ENCODE measurements at regions of chr7 and their contacts with region 1.

Region 1: GRCh38 chr7:7944619-7945282 is 23.8 kb upstream of the GLCCI1 start:
- DNase-seq: peak; percentile 91
- H3K4me3 ChIP-seq: peak overlapping the region; percentile 56
- H3K27ac ChIP-seq: peak overlapping the region; percentile 91
- H3K4me1 ChIP-seq: peaks cover 37% of the 10 kb centered on the region
- CTCF ChIP-seq: no peak

Region 2: DNA sequence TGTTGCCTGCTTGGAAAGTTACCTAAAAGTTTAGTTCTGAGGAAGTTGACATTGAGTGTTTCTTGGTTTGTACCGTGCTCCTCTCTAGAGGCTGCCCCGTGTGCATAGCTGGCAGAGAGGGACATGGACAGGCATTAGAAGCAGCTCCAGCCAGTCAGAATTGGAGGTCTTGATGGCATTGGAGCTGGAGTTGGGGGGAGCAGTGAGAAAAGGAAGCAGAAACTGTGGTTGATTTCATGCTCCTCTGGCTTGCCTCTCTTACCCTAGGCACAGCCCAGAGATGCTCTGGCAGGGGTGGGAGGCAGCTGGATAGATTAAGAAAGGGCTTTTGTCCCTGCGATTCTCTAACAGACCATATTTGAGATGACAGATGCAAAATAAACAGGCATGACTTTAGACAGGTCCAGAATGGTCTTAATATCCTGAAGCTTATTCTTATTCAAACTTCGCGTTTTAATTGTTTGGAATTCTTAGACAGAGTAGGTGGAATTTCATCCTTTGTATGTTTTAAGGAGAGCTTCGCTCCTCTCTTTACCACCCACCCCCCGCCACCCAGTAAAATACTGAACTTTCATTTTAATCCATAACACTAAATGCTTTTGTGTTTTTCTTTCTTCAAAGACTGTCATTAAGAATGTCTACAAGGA is 49.6 kb before region 1 on chr7:
- CTCF ChIA-PET with region 1: no interaction called
- POLR2A ChIA-PET with region 1: no interaction called
- intact Hi-C with region 1: no loop called
- DNase-seq: no peak
- H3K4me3 ChIP-seq: no peak overlapping the region
- H3K27ac ChIP-seq: no peak overlapping the region
- H3K4me1 ChIP-seq: no peaks in the 10 kb centered on the region
- CTCF ChIP-seq: no peak

Region 3: GRCh38 chr7:7932580-7932979 is 12.2 kb before region 1 on chr7:
- CTCF ChIA-PET with region 1: interaction called, 3 read pairs
- POLR2A ChIA-PET with region 1: interaction called, 64 read pairs
- intact Hi-C with region 1: no loop called
- DNase-seq: no peak
- H3K4me3 ChIP-seq: no peak overlapping the region
- H3K27ac ChIP-seq: no peak overlapping the region
- H3K4me1 ChIP-seq: no peaks in the 10 kb centered on the region
- CTCF ChIP-seq: no peak

Region 4: GRCh38 chr7:7956531-7957128 is 11.9 kb after region 1 on chr7:
- CTCF ChIA-PET with region 1: no interaction called
- POLR2A ChIA-PET with region 1: interaction called, 15 read pairs
- intact Hi-C with region 1: no loop called
- DNase-seq: no peak
- H3K4me3 ChIP-seq: no peak overlapping the region
- H3K27ac ChIP-seq: no peak overlapping the region
- H3K4me1 ChIP-seq: peaks cover 14% of the 10 kb centered on the region
- CTCF ChIP-seq: no peak

Measured in OCI-LY7 (cell line).